Adrenal gland (tissue), 19 donors: ENCODE measurements at regions of chr11 and their contacts with region 1.

Region 1: GRCh38 chr11:73661035-73661628 is 14.8 kb downstream of the PLEKHB1 start:
- DNase-seq: peak; percentile 86 to 95 (median 90)
- H3K4me3 ChIP-seq: peak overlapping the region in 1 of 4 donors; percentile 45
- H3K27ac ChIP-seq: no peak overlapping the region
- H3K4me1 ChIP-seq: peaks cover 0 to 19% of the 10 kb centered on the region in 2 donors
- H3K27me3 ChIP-seq: no peaks in the 10 kb centered on the region
- CTCF ChIP-seq: peak; percentile 89 to 99 (median 98)
- POLR2A ChIP-seq: no peak

Region 2: GRCh38 chr11:73404048-73404447 is 257.1 kb before region 1 on chr11:
- intact Hi-C with region 1: loop called in 1 of 2 experiments (anchors 2 kb)
- DNase-seq: peak; percentile 70 to 92 (median 81)
- H3K4me3 ChIP-seq: no peak overlapping the region
- H3K27ac ChIP-seq: peak overlapping the region in 1 of 5 donors; percentile 23
- H3K4me1 ChIP-seq: no peaks in the 10 kb centered on the region
- H3K27me3 ChIP-seq: no peaks in the 10 kb centered on the region
- CTCF ChIP-seq: peak; percentile 51 to 87 (median 82)
- POLR2A ChIP-seq: no peak

Region 3: DNA sequence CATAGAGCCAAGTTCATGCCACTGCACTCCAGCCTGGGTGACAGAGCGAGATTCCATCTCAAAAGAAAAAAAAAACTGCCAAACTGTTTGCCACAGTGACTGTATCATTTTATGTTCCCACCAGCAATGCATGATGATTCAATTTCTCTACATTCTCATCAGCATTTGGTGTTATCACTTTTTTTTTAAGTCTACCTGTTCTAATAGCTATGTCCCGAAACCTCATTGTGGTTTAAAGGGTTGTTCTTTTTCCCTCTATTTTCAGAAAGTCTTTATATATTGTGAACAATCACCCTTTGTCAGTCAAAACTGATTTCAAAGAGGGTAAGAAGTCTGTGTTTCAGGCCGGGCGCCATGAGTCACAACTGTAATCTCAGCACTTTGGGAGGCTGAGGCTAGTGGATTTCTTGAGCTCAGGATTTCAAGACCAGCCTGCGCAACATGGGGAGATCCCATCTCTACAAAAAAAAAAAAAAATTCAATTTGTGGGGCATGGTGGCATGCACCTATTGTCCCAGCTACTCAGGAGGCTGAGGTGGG is 48.5 kb before region 1 on chr11:
- intact Hi-C with region 1: no loop called
- DNase-seq: no peak
- H3K4me3 ChIP-seq: no peak overlapping the region
- H3K27ac ChIP-seq: no peak overlapping the region
- H3K4me1 ChIP-seq: no peaks in the 10 kb centered on the region
- H3K27me3 ChIP-seq: no peaks in the 10 kb centered on the region
- CTCF ChIP-seq: no peak
- POLR2A ChIP-seq: no peak

Region 4: GRCh38 chr11:73625696-73626318 is 35.3 kb before region 1 on chr11:
- intact Hi-C with region 1: loop called in 1 of 2 experiments (anchors 5 kb)
- DNase-seq: peak; percentile 71 to 91 (median 75)
- H3K4me3 ChIP-seq: no peak overlapping the region
- H3K27ac ChIP-seq: no peak overlapping the region
- H3K4me1 ChIP-seq: peaks cover 0 to 4% of the 10 kb centered on the region in 2 donors
- H3K27me3 ChIP-seq: peaks cover 11% of the 10 kb centered on the region
- CTCF ChIP-seq: peak; percentile 69 to 94 (median 86)
- POLR2A ChIP-seq: no peak

Region 5: DNA sequence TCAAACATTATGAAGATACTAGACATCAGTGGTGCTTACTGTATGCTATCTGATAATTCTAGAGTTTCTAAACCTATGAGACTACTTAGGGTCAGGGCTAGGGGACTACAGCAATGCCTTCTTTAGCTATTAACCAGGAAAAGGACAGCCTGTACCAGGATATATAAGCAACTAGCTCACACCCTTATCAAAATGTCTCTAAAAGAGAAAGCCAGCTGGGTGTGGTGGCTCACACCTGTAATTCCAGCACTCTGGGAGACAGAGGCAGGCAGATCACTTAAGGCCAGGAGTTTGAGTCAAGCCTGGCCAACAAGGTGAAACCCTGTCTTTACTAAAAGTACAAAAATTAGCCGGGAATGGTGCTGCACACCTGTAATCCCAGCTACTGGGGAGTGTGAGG is 43.9 kb after region 1 on chr11:
- intact Hi-C with region 1: no loop called
- DNase-seq: no peak
- H3K4me3 ChIP-seq: no peak overlapping the region
- H3K27ac ChIP-seq: no peak overlapping the region
- H3K4me1 ChIP-seq: no peaks in the 10 kb centered on the region
- H3K27me3 ChIP-seq: no peaks in the 10 kb centered on the region
- CTCF ChIP-seq: no peak
- POLR2A ChIP-seq: no peak

Region 6: DNA sequence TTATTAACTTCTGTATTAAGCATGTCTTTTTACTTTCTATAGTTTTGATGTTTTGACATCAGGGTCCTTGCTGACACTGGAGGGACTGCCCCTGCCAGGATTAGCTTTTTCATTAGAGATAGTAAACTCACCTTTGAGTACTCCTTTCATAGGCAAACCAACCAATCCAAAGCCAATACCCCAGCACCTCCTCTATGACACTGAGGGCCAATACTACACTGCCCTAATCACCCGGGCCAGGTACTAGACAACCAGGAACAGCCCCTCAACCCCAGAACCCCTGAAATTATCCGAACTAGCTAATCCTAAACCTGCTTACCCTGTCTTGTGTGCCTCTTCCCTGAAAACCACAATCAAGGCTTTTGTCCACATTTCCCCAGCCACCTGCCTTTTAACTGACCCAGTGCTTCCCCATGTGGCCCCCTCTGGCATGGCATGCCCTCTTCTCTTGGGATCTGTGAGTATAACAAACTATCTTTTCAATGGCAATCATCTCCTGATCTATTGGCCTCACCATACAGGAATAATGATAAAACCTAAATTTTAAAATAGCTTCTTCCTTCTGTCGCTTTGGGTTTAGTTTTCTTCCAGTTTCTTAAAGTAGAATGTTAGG is 68.6 kb after region 1 on chr11:
- intact Hi-C with region 1: no loop called
- DNase-seq: peak in 1 of 7 donors; percentile 36
- H3K4me3 ChIP-seq: no peak overlapping the region
- H3K27ac ChIP-seq: no peak overlapping the region
- H3K4me1 ChIP-seq: peaks cover 0 to under 1% of the 10 kb centered on the region in 2 donors
- H3K27me3 ChIP-seq: no peaks in the 10 kb centered on the region
- CTCF ChIP-seq: peak in 5 of 6 experiments; percentile 19 to 39 (median 37)
- POLR2A ChIP-seq: no peak

Region 7: DNA sequence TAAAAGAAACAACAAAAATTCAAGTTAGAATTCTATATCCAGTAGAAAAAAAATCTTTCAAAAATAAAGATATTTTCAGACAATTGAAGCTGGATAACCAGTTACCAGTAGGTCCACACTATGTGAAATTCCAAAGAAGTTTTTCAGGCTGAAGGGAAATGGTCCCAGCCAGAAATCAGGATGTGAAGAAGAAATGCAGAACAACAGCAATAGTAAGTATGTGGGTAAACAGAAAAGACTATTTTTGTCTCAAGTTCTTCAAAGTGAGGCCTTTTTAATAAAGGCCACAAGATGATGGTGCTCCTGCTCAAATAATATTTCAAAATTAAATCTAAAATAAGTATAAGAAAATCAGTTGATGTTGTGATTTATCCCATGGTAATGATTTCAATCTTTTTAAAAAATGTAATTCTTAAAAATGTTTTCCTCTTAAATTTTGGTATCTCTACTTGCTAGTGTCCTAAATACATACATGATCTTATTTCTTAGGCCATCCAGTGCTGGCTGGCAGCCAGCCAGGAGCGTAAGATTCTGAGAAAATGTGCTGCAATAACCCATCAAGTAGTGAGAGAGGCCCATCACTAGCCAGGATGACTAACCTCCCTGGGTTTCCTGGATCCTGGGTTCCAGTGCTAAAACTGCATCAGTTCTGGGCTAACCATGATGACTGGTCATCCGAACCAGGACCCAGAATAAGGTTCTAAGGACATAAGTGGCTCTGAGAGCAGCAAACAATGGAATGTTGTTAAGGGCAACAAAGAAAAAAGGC is 363.3 kb after region 1 on chr11:
- intact Hi-C with region 1: no loop called
- DNase-seq: peak; percentile 44 to 91 (median 68)
- H3K4me3 ChIP-seq: no peak overlapping the region
- H3K27ac ChIP-seq: peak overlapping the region in 2 of 5 donors; percentile 31 to 41
- H3K4me1 ChIP-seq: peaks cover 8 to 32% of the 10 kb centered on the region in 2 donors
- H3K27me3 ChIP-seq: no peaks in the 10 kb centered on the region
- CTCF ChIP-seq: no peak
- POLR2A ChIP-seq: no peak